Panc1 (cell line): ENCODE measurements at regions of chr10 and their contacts with region 1.

Region 1: GRCh38 chr10:131183546-131184045 is 127.9 kb downstream of the TCERG1L start:
- DNase-seq: no peak
- ATAC-seq: no peak
- H3K4me3 ChIP-seq: no peak overlapping the region
- H3K27ac ChIP-seq: no peak overlapping the region
- H3K4me1 ChIP-seq: no peaks in the 10 kb centered on the region
- H3K27me3 ChIP-seq: peaks cover 14% of the 10 kb centered on the region
- CTCF ChIP-seq: no peak

Region 2: DNA sequence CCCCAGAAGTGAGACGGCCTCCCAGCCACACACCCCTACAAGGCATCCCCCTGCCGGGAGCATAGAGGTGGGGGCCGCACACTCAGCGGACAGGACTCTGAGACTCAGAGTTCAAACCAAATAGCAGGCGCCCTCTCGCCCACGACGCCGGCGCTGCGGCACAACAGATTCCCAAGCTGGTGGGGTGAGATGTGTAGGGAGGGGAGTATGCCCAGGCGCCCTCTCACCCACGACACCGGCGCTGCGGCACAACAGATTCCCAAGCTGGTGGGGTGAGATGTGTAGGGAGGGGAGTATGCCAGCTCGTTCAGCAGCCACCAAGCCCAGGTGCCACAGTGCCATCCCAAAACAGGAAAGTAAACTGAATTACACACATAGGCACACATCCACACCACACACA is 63.2 kb after region 1 on chr10:
- CTCF ChIA-PET with region 1: no interaction called
- POLR2A ChIA-PET with region 1: interaction called, 14 read pairs
- in situ Hi-C with region 1: no loop called
- intact Hi-C with region 1: no loop called
- DNase-seq: no peak
- ATAC-seq: no peak
- H3K4me3 ChIP-seq: no peak overlapping the region
- H3K27ac ChIP-seq: no peak overlapping the region
- H3K4me1 ChIP-seq: no peaks in the 10 kb centered on the region
- H3K27me3 ChIP-seq: peaks cover 20% of the 10 kb centered on the region
- CTCF ChIP-seq: no peak